Panc1 (cell line): ENCODE measurements at regions of chr13 and their contacts with region 1.

Region 1: GRCh38 chr13:108961542-108962125 is 332.2 kb downstream of the MYO16 start:
- DNase-seq: peak; percentile 46
- ATAC-seq: peak; percentile 82
- H3K4me3 ChIP-seq: no peak overlapping the region
- H3K27ac ChIP-seq: no peak overlapping the region
- H3K4me1 ChIP-seq: no peaks in the 10 kb centered on the region
- H3K27me3 ChIP-seq: no peaks in the 10 kb centered on the region
- CTCF ChIP-seq: peak; percentile 63

Region 2: GRCh38 chr13:109058082-109058481 is 96.4 kb after region 1 on chr13:
- CTCF ChIA-PET with region 1: no interaction called
- POLR2A ChIA-PET with region 1: no interaction called
- in situ Hi-C with region 1: no loop called
- intact Hi-C with region 1: no loop called
- DNase-seq: no peak
- ATAC-seq: no peak
- H3K4me3 ChIP-seq: no peak overlapping the region
- H3K27ac ChIP-seq: no peak overlapping the region
- H3K4me1 ChIP-seq: no peaks in the 10 kb centered on the region
- H3K27me3 ChIP-seq: no peaks in the 10 kb centered on the region
- CTCF ChIP-seq: no peak

Region 3: DNA sequence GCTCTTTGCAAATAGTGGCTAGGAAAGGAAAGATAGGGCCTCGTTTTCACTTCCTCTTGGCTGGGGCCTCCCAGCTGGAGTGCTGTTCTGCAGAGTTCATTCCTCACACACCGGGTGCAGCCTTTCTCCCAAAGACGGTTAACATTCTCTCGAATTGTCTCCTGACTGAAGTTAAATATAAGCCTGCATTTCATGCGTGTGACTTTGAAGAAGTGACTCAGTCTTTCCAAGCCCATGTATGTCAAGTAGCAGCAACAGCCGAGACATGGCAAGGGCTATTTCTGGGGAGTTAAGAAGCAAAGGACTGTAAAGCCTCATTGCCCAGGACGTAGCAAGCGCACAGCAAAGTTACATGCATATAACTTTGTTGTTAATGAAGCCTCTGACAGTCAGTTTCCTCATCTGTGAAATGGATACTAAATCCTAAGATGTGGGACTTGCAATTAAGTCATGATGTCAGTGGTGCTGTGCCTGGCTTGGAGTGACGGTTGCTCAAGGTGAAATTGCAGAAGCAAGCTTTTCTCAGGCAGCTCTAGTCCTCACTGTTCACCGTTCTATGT is 170.1 kb after region 1 on chr13:
- CTCF ChIA-PET with region 1: no interaction called
- POLR2A ChIA-PET with region 1: no interaction called
- in situ Hi-C with region 1: no loop called
- intact Hi-C with region 1: loop called (anchors 10 kb)
- DNase-seq: no peak
- ATAC-seq: no peak
- H3K4me3 ChIP-seq: no peak overlapping the region
- H3K27ac ChIP-seq: no peak overlapping the region
- H3K4me1 ChIP-seq: no peaks in the 10 kb centered on the region
- H3K27me3 ChIP-seq: no peaks in the 10 kb centered on the region
- CTCF ChIP-seq: no peak

Region 4: GRCh38 chr13:110116072-110116487 is 1154.4 kb after region 1 on chr13:
- CTCF ChIA-PET with region 1: no interaction called
- POLR2A ChIA-PET with region 1: no interaction called
- in situ Hi-C with region 1: no loop called
- intact Hi-C with region 1: loop called (anchors 5 kb)
- DNase-seq: no peak
- ATAC-seq: peak; percentile 89
- H3K4me3 ChIP-seq: no peak overlapping the region
- H3K27ac ChIP-seq: no peak overlapping the region
- H3K4me1 ChIP-seq: no peaks in the 10 kb centered on the region
- H3K27me3 ChIP-seq: peaks cover 5% of the 10 kb centered on the region
- CTCF ChIP-seq: peak; percentile 85